ENCODE measurements at regions of chr9 and their contacts with region 1.

Region 1: GRCh38 chr9:124537926-124538325 is 30.7 kb upstream of the NR5A1 start:
- DNase-seq: no peak
- ATAC-seq: no peak
- H3K4me3 ChIP-seq: no peak overlapping the region
- H3K27ac ChIP-seq: no peak overlapping the region
- H3K4me1 ChIP-seq: peaks cover 7% of the 10 kb centered on the region; the same call in 1 of the 2 replicates
- H3K27me3 ChIP-seq: no peaks in the 10 kb centered on the region
- CTCF ChIP-seq: no peak
- EP300 ChIP-seq: no peak
- POLR2A ChIP-seq: no peak
- RAD21 ChIP-seq: no peak

Region 2: GRCh38 chr9:124480621-124480981 is 57.3 kb before region 1 on chr9:
- CTCF ChIA-PET with region 1: no interaction called
- POLR2A ChIA-PET with region 1: no interaction called
- in situ Hi-C with region 1: no loop called
- intact Hi-C with region 1: loop called (anchors 5 kb)
- DNase-seq: peak; percentile 34
- ATAC-seq: peak; percentile 74
- H3K4me3 ChIP-seq: no peak overlapping the region
- H3K27ac ChIP-seq: no peak overlapping the region
- H3K4me1 ChIP-seq: peaks cover 21% of the 10 kb centered on the region
- H3K27me3 ChIP-seq: peaks cover 4 to 31% of the 10 kb centered on the region in 2 experiments; a peak in 4 of 5 replicates
- CTCF ChIP-seq: peak; percentile 79
- EP300 ChIP-seq: no peak
- POLR2A ChIP-seq: no peak
- RAD21 ChIP-seq: no peak

Region 3: DNA sequence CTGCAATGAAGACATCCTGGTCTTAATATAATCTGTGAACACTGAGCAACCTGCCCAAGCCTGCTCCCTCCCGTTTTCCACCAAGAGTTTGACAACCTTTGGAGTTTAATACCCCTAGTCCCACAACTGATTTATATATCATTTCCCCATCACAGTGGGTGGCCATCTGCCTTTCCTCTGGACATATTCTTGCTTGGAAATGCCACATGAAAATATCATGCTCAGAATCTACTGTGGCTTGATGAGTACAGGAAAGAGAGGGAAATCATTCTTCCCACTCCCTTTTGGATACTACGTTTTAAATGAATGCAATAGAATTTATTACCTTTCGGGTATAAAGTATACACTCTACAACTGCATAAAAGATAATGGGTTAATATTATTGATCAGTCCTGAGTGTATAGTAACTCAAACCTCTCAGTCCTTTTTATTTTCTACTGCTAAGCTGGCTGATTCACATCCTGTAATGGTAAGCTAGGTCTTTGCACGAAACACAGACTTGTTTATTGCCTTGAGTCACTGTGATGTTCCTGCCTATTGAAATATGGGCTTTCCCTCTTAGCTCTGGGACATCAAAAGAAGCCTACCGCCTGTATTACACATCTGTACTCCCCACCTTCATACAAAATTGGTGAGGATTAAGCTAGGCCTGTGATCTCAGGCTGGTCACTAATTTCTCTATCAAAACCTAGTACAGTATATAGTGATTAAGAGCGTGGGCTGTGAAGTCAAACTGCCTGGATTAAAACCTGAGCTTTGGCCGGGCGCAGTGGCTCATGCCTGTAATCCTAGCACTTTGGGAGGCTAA is 36.8 kb after region 1 on chr9:
- CTCF ChIA-PET with region 1: no interaction called
- POLR2A ChIA-PET with region 1: no interaction called
- in situ Hi-C with region 1: no loop called
- intact Hi-C with region 1: no loop called
- DNase-seq: peak; percentile 35
- ATAC-seq: no peak
- H3K4me3 ChIP-seq: no peak overlapping the region
- H3K27ac ChIP-seq: no peak overlapping the region
- H3K4me1 ChIP-seq: peaks cover 56% of the 10 kb centered on the region
- H3K27me3 ChIP-seq: no peaks in the 10 kb centered on the region
- CTCF ChIP-seq: no peak
- EP300 ChIP-seq: no peak
- POLR2A ChIP-seq: no peak
- RAD21 ChIP-seq: no peak

Measured in HepG2 (cell line).